Right ventricle myocardium inferior (tissue), 1 donor: ENCODE measurements at regions of chr13 and their contacts with region 1.

Region 1: GRCh38 chr13:39144941-39145533 is 106.8 kb downstream of the NHLRC3 start:
- DNase-seq: no peak
- ATAC-seq: peak; percentile 73

Region 2: DNA sequence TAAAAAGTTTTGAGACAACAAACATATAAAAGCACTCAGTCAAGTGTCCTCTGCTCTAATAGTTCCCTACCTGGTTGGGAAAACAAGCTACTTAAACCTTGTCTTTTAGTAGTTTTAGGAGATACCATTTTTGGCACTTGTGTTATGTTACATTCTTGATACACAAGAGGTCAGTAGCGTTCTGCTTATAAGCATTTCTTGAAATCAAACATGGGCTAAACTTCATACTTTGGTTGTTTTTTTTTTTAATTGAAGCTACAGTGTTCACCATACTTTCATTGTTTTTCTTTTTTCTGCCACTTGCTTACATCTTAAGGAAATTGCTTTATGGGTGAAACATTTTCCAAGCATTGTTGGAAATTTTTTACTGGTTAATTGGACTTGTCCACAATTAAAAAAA is 93.9 kb before region 1 on chr13:
- intact Hi-C with region 1: loop called (anchors 10 kb)
- DNase-seq: no peak
- ATAC-seq: no peak

Region 3: DNA sequence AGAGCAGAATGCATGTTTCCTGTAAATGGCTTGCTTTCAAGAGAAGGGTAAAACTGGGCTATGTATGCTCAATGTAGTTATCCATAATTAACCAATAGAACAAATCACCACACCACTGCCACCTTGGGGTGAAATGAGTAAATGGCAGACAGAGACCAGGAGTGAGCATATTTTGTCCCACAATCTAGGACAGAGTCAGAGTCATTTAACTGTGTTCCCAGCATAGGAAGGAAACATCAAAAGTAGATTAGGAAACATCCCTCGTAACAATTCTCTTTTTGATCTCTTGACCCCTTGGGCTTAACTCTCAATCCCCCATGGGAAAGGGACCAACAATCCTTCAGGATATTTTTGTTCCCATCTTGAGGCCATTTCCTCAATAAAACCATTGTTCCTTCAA is 118.0 kb after region 1 on chr13:
- intact Hi-C with region 1: loop called (anchors 1 kb)
- DNase-seq: no peak
- ATAC-seq: peak; percentile 88

Region 4: DNA sequence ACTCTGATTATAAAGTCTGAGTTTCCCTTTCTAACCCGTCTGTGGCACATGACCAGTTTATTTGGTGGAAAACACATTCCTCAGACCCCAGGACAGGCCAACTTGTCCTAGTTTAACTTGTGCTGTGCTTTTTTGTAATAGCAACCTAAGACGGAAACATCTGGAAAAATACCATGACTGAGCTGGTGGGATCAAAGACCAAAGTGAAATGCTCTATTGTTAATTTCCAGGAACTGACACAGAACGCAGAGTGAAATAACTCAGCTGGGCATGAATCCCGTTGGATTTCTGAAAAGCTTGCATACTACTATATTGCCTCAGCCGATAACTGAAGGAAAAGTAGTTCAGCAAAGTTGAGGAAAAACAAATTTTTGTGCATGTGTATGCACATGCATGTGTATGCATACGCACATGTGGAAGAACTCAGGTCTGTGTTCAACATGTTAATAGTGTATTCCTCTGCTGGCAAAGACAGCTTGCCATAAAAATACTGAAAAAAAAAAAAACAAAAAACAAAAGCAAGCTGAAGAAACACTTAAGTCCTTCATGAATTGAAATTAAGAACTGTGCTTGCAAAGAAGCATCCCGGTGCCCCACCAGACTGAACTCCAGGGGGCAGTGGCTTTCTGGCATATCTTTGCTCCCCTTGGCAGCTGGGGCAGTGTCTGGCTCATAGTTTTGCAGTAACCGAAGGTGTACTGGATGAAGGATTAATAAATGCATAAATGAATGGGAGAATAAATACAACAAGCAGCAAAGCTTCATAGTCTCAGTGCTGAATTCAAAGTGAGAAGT is 270.2 kb after region 1 on chr13:
- intact Hi-C with region 1: loop called (anchors 5 kb)
- DNase-seq: no peak
- ATAC-seq: peak; percentile 70

Region 5: DNA sequence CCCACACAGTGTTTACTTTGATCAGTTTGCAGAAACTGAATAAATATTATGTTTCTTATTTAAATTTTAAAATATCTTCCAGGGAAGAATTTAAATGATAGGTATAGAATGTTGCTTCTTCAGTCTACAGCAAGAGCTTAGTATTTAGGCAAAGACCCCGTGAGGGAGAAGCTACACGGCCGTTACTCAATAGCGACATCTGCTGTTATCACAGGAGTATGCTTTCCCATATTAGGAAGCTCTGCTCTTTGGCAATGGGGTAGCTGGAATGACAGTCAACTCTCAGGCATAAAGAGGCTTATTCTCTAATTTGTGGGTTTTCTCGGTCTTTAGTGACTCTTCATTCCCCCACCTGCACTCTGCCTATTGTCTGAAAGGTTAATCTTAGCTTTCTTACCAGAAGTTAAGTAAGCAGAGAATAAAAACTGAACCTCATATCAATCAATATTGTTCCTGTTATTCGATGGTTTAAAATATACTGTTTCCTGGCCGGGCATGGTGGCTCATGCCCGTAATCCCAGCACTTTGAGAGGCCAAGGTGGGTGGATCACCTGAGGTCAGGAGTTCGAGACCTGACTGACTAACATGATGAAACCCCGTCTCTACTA is 471.2 kb after region 1 on chr13:
- intact Hi-C with region 1: loop called (anchors 2 kb)
- DNase-seq: no peak
- ATAC-seq: peak; percentile 84